ENCODE measurements at regions of chr6 and their contacts with region 1.

Region 1: GRCh38 chr6:139375232-139376016 is 976 bp upstream of the CITED2 start:
- DNase-seq: peak; percentile 71 to 91
- H3K4me3 ChIP-seq: peak overlapping the region; percentile 79 to 96 (median 95)
- H3K27ac ChIP-seq: peak overlapping the region; percentile 92
- H3K4me1 ChIP-seq: peaks cover 7 to 14% (median 8%) of the 10 kb centered on the region in 4 experiments; a peak in 6 of 7 replicates
- H3K27me3 ChIP-seq: 0 out of 7 replicates have a peak, but pooled peaks cover 0 to 3% (median 0%) of the 10 kb centered on the region in 4 experiments
- CTCF ChIP-seq: no peak
- EP300 ChIP-seq: peak in 1 of 2 experiments; percentile 52; a peak in 1 of 3 replicates
- POLR2A ChIP-seq: peak; percentile 65 to 80; a peak in 2 of 3 replicates
- RAD21 ChIP-seq: peak; percentile 31 to 56; a peak in 3 of 4 replicates

Region 2: GRCh38 chr6:139364302-139364981 is 11.0 kb before region 1 on chr6:
- CTCF ChIA-PET with region 1: interaction called, 11 read pairs
- POLR2A ChIA-PET with region 1: interaction called, 15 read pairs
- DNase-seq: no peak
- H3K4me3 ChIP-seq: no peak overlapping the region
- H3K27ac ChIP-seq: no peak overlapping the region
- H3K4me1 ChIP-seq: peaks cover 0 to 21% (median 15%) of the 10 kb centered on the region in 4 experiments; a peak in 5 of 7 replicates
- H3K27me3 ChIP-seq: no peaks in the 10 kb centered on the region
- CTCF ChIP-seq: peak in 2 of 3 experiments; percentile 48 to 54; a peak in 2 of 4 replicates
- EP300 ChIP-seq: no peak
- POLR2A ChIP-seq: no peak
- RAD21 ChIP-seq: peak; percentile 91 to 92

Region 3: GRCh38 chr6:139392794-139393193 is 17.4 kb after region 1 on chr6:
- CTCF ChIA-PET with region 1: interaction called, 6 read pairs
- POLR2A ChIA-PET with region 1: interaction called, 34 read pairs
- DNase-seq: no peak
- H3K4me3 ChIP-seq: no peak overlapping the region
- H3K27ac ChIP-seq: no peak overlapping the region
- H3K4me1 ChIP-seq: peaks cover 0 to 8% (median 1%) of the 10 kb centered on the region in 4 experiments; a peak in 3 of 7 replicates
- H3K27me3 ChIP-seq: peaks cover 9 to 42% (median 28%) of the 10 kb centered on the region in 4 experiments
- CTCF ChIP-seq: no peak
- EP300 ChIP-seq: no peak
- POLR2A ChIP-seq: no peak
- RAD21 ChIP-seq: no peak

Region 4: DNA sequence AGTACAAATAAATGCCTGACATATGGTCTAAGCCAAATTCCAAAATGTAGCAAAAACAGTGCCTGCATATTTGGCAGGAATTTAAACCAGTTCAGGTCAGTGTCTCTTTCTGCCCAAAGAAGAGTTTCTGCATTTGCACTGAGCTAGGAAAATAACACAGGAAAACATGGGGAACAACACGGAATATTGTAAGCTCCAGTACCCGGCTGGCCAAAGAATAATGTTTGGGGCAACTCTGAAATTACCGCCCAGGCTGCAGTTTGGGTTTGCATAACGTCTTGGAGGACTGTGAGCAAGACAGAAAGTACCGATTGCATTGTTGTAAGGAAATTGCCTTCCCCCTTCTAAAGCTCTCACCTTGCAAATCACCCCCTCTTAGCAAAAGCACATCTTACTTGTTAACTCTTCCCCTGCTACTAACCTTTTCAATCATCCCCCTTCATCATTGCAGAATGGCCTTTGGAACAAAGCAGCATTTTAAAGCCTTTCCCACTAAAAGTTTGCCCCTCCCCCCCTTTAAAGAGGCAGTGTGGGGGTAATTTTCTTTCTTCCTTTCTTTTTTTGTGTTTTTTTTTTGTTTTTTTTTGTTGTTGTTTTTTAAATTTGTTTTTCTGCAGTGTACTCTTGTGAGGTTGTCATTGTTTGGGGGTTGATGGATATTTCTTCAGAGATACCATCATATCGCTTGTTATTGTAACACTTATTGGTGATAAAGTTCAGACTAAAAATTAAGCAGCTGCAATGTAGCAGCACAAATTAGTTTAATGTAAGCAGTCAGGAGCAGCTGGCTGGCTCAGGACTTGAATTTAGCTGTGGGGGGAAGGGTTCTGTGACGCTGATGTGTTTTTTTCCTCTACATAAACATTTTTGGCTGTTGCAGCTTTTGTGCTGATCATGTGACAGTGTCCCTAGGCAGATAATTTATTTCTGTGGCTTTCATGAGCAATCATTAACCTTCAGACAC is 99.0 kb after region 1 on chr6:
- CTCF ChIA-PET with region 1: interaction called, 4 read pairs
- POLR2A ChIA-PET with region 1: interaction called, 33 read pairs
- DNase-seq: no peak
- H3K4me3 ChIP-seq: peak overlapping the region in 2 of 4 experiments; percentile 18 to 40; a peak in 2 of 8 replicates
- H3K27ac ChIP-seq: peak overlapping the region; percentile 64
- H3K4me1 ChIP-seq: peaks cover 11 to 28% (median 14%) of the 10 kb centered on the region in 4 experiments
- H3K27me3 ChIP-seq: no peaks in the 10 kb centered on the region
- CTCF ChIP-seq: no peak
- EP300 ChIP-seq: no peak
- POLR2A ChIP-seq: no peak
- RAD21 ChIP-seq: no peak

Region 5: DNA sequence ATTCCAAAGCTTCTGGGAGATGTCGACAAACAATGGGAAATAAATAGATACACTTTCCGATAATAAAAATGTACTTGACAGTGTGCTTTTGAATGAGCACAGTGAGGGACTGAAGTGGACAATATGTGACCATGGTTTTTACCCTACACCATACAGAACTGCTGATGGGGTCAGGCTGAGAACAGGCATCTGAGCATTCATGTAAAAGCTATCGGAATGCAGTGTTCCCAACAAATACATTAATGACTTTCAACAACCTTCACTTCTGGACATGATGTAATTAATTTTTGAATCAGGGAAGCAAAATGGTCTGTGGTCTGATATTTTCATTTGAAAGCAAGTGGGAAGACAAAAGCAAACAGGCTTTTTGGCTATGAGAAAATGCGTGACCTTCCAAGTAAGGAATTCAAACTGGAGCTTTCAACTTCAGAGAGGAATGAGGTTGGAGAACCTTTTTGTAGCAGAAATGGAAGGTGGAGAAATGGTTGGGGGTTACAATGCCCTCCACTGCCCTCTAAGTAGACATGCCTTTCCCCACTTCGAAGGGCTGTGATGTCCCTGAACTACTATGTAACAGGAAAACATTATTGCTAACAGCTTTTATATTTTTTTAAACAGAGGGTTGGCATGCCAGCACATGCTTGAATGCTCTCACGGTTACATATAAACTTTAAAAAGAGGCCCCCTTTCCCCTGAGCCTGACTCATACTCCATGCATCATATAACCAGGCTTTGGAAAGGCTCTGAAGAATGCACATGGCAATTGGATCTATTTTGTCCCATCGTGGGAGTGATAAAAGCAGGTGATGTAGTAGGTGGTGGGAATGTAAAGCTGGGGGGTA is 202.6 kb after region 1 on chr6:
- CTCF ChIA-PET with region 1: interaction called, 3 read pairs
- POLR2A ChIA-PET with region 1: interaction called, 10 read pairs
- DNase-seq: no peak
- H3K4me3 ChIP-seq: no peak overlapping the region
- H3K27ac ChIP-seq: no peak overlapping the region
- H3K4me1 ChIP-seq: no peaks in the 10 kb centered on the region; a peak in 1 of 7 replicates
- H3K27me3 ChIP-seq: no peaks in the 10 kb centered on the region
- CTCF ChIP-seq: no peak
- EP300 ChIP-seq: no peak
- POLR2A ChIP-seq: no peak
- RAD21 ChIP-seq: no peak

Region 6: GRCh38 chr6:139888681-139889122 is 513.3 kb after region 1 on chr6:
- CTCF ChIA-PET with region 1: interaction called, 13 read pairs
- POLR2A ChIA-PET with region 1: interaction called, 30 read pairs
- DNase-seq: peak; percentile 56 to 71
- H3K4me3 ChIP-seq: peak overlapping the region in 1 of 4 experiments; percentile 23; a peak in 1 of 8 replicates
- H3K27ac ChIP-seq: peak overlapping the region; percentile 78
- H3K4me1 ChIP-seq: peaks cover 2 to 39% (median 12%) of the 10 kb centered on the region in 4 experiments; a peak in 4 of 7 replicates
- H3K27me3 ChIP-seq: no peaks in the 10 kb centered on the region
- CTCF ChIP-seq: no peak
- EP300 ChIP-seq: peak in 1 of 2 experiments; percentile 86; a peak in 2 of 3 replicates
- POLR2A ChIP-seq: no peak
- RAD21 ChIP-seq: peak in 1 of 2 experiments; percentile 18; a peak in 2 of 4 replicates

Region 7: GRCh38 chr6:139940741-139941729 is 565.6 kb after region 1 on chr6:
- CTCF ChIA-PET with region 1: no interaction called
- POLR2A ChIA-PET with region 1: interaction called, 11 read pairs
- DNase-seq: no peak
- H3K4me3 ChIP-seq: no peak overlapping the region
- H3K27ac ChIP-seq: no peak overlapping the region
- H3K4me1 ChIP-seq: peaks cover 0 to 5% (median 0%) of the 10 kb centered on the region in 4 experiments; a peak in 1 of 7 replicates
- H3K27me3 ChIP-seq: no peaks in the 10 kb centered on the region
- CTCF ChIP-seq: no peak
- EP300 ChIP-seq: no peak
- POLR2A ChIP-seq: no peak
- RAD21 ChIP-seq: no peak